Esophagus muscularis mucosa (tissue), 4 donors: ENCODE measurements at regions of chr20 and their contacts with region 1.

Region 1: GRCh38 chr20:6828794-6829423 is 61.4 kb downstream of the BMP2 start:
- DNase-seq: no peak
- H3K4me3 ChIP-seq: no peak overlapping the region
- H3K27ac ChIP-seq: no peak overlapping the region
- H3K4me1 ChIP-seq: no peaks in the 10 kb centered on the region
- H3K27me3 ChIP-seq: no peaks in the 10 kb centered on the region
- CTCF ChIP-seq: peak; percentile 34 to 66 (median 59)
- EP300 ChIP-seq: no peak
- POLR2A ChIP-seq: no peak

Region 2: GRCh38 chr20:7859356-7859802 is 1030.5 kb after region 1 on chr20:
- intact Hi-C with region 1: loop called (anchors 5 kb)
- DNase-seq: no peak
- H3K4me3 ChIP-seq: no peak overlapping the region
- H3K27ac ChIP-seq: no peak overlapping the region
- H3K4me1 ChIP-seq: peaks cover 0 to 7% (median 3%) of the 10 kb centered on the region in 4 donors
- H3K27me3 ChIP-seq: no peaks in the 10 kb centered on the region
- CTCF ChIP-seq: peak; percentile 50 to 67 (median 53)
- EP300 ChIP-seq: no peak
- POLR2A ChIP-seq: no peak